ENCODE measurements at regions of chr15 and their contacts with region 1.

Region 1: GRCh38 chr15:99928429-99928981 is 195.3 kb upstream of the LYSMD4 start:
- DNase-seq: peak; percentile 72 to 89 (median 79)
- H3K4me3 ChIP-seq: peak overlapping the region in 58 of 59 donors; percentile 19 to 75 (median 56)
- H3K27ac ChIP-seq: peak overlapping the region in 54 of 59 donors; percentile 4 to 94 (median 74)
- H3K27me3 ChIP-seq: peaks cover 0 to 6% (median 0%) of the 10 kb centered on the region in 45 donors
- CTCF ChIP-seq: peak in 55 of 56 donors; percentile 19 to 85 (median 74)

Region 2: GRCh38 chr15:99944131-99944530 is 15.6 kb after region 1 on chr15:
- intact Hi-C with region 1: no loop called
- DNase-seq: no peak
- H3K4me3 ChIP-seq: no peak overlapping the region
- H3K27ac ChIP-seq: no peak overlapping the region
- H3K27me3 ChIP-seq: no peaks in the 10 kb centered on the region
- CTCF ChIP-seq: no peak

Region 3: GRCh38 chr15:100131321-100132224 is 203.1 kb after region 1 on chr15:
- intact Hi-C with region 1: loop called in 1 of 2 experiments (anchors 10 kb)
- DNase-seq: no peak
- H3K4me3 ChIP-seq: peak overlapping the region in 25 of 59 donors; percentile 2 to 48 (median 21)
- H3K27ac ChIP-seq: no peak overlapping the region
- H3K27me3 ChIP-seq: no peaks in the 10 kb centered on the region
- CTCF ChIP-seq: peak in 37 of 56 donors; percentile 6 to 60 (median 26)

Region 4: GRCh38 chr15:100341662-100342560 is 413.4 kb after region 1 on chr15 and contains the start of gene ADAMTS17:
- intact Hi-C with region 1: loop called (anchors 2 kb)
- DNase-seq: peak; percentile 86 to 97 (median 96)
- H3K4me3 ChIP-seq: peak within 1 kb of the TSS; percentile 62 to 86 (median 77)
- H3K27ac ChIP-seq: peak within 1 kb of the TSS in 4 of 59 donors; percentile 7 to 61 (median 35)
- H3K27me3 ChIP-seq: peaks cover 0 to 4% (median 0%) of the 10 kb centered on the region in 45 donors
- CTCF ChIP-seq: peak; percentile 88 to 99 (median 97)
- total RNA-seq, gene ADAMTS17: 4.7 to 28.7 (median 11.1) TPM

Region 5: GRCh38 chr15:100596792-100597191 is 668.3 kb after region 1 on chr15:
- intact Hi-C with region 1: loop called in 1 of 2 experiments (anchors 10 kb)
- DNase-seq: no peak
- H3K4me3 ChIP-seq: no peak overlapping the region
- H3K27ac ChIP-seq: no peak overlapping the region
- H3K27me3 ChIP-seq: no peaks in the 10 kb centered on the region
- CTCF ChIP-seq: no peak